Heart right ventricle (tissue), 16 donors: ENCODE measurements at regions of chr2 and their contacts with region 1.

Region 1: DNA sequence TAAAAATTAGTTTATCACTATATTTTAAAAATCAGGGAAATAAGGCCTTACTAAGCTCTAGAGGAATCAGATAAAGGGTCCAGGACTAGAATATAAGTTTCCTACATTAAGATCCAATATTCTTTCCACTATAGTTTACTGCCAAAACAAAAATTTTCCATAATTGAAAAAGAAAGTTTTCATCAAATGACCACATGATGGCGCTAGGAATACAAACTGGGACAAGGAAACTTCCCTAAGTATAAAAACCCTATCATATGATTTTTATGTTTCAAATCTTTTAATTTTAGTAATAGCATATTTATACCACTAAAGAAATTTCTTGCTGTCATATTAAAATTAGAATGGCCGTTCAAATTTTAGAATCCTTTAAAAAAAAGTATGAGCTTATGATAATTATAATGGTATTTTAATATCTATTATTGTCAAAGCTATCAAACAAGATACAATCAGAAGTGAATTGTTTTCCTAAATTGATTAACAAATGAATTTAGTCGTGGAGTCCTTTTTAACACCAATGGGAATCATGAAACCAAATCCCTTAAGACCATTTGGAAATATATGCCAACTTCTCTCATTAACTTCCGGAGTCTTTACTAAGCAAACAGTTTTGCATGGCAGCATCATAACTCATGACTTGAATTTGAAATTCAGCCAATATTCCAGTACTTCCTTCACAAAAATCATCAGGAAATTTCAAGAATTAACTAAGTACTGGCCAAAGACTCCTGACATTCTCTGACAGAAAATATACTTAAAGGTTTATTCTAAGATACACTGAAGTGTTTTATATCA is 70.3 kb downstream of the SCN1A start:
- DNase-seq: no peak
- ATAC-seq: no peak
- H3K4me3 ChIP-seq: no peak overlapping the region
- H3K27ac ChIP-seq: no peak overlapping the region
- H3K4me1 ChIP-seq: peaks cover 0 to 3% (median 0%) of the 10 kb centered on the region in 9 donors
- H3K27me3 ChIP-seq: no peaks in the 10 kb centered on the region
- CTCF ChIP-seq: peak in 8 of 9 donors; percentile 19 to 67 (median 52)

Region 2: DNA sequence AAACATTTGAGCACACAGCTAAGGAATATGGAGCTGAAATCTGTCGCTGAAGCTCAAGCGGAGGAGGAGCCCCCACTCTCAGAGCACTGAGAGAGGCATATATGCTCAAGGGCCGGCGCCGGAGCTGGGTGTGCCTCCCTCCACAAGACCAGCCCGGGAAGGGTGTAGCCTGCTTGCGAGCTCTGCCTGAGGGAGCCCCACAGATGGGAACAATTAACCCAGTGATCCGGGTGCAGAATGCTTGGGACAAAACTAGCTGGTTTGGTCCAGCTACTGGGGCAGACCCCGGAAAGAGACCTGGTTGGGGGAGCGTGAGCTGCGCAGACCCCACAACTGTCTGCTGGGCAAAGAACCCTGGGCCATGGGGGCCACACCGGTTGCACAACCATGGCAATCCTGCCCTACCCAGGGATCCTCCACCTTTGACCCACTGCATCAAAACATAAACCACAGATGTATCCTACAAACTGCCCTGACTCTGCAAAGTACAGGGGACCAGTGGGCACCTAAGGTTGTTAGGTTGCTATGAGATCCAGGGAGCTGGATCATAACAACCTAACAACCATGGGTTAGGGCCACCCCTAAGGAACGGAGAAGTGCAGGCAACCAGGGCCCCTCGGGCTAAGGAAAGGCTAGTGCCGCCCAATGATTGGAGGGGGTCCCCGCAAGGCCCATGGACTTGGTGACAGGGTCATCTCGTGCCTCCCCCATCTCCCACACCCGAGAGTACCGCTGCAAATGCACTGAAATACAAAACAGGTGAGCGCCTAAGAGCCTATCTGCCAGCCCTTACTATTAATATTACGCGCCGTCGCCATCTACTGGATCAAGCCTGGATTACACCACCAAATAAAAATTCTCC is 123.6 kb after region 1 on chr2:
- intact Hi-C with region 1: loop called in 3 of 10 experiments (anchors 5 to 10 kb)
- DNase-seq: peak; percentile 8 to 10
- ATAC-seq: peak in 6 of 8 donors; percentile 38 to 58 (median 56)
- H3K4me3 ChIP-seq: no peak overlapping the region
- H3K27ac ChIP-seq: no peak overlapping the region
- H3K4me1 ChIP-seq: no peaks in the 10 kb centered on the region
- H3K27me3 ChIP-seq: peaks cover 0 to 16% (median 0%) of the 10 kb centered on the region in 7 donors
- CTCF ChIP-seq: peak in 8 of 9 donors; percentile 10 to 56 (median 50)